ENCODE measurements at regions of chr14 and their contacts with region 1.

Region 1: GRCh38 chr14:34098045-34098984 is 147.4 kb upstream of the EGLN3 start:
- DNase-seq: peak; percentile 51
- ATAC-seq: no peak
- H3K4me3 Mint-ChIP-seq: no peak overlapping the region
- H3K27ac Mint-ChIP-seq: peak overlapping the region; percentile 48
- H3K4me1 Mint-ChIP-seq: peaks cover 30% of the 10 kb centered on the region
- H3K27me3 Mint-ChIP-seq: peaks cover 4% of the 10 kb centered on the region

Region 2: GRCh38 chr14:33839193-33840076 is 258.9 kb before region 1 on chr14:
- CTCF ChIA-PET with region 1: interaction called, 73 read pairs
- POLR2A ChIA-PET with region 1: no interaction called
- DNase-seq: peak; percentile 72
- ATAC-seq: peak; percentile 69
- H3K4me3 Mint-ChIP-seq: no peak overlapping the region
- H3K27ac Mint-ChIP-seq: no peak overlapping the region
- H3K4me1 Mint-ChIP-seq: peaks cover 31% of the 10 kb centered on the region
- H3K27me3 Mint-ChIP-seq: no peaks in the 10 kb centered on the region

Region 3: DNA sequence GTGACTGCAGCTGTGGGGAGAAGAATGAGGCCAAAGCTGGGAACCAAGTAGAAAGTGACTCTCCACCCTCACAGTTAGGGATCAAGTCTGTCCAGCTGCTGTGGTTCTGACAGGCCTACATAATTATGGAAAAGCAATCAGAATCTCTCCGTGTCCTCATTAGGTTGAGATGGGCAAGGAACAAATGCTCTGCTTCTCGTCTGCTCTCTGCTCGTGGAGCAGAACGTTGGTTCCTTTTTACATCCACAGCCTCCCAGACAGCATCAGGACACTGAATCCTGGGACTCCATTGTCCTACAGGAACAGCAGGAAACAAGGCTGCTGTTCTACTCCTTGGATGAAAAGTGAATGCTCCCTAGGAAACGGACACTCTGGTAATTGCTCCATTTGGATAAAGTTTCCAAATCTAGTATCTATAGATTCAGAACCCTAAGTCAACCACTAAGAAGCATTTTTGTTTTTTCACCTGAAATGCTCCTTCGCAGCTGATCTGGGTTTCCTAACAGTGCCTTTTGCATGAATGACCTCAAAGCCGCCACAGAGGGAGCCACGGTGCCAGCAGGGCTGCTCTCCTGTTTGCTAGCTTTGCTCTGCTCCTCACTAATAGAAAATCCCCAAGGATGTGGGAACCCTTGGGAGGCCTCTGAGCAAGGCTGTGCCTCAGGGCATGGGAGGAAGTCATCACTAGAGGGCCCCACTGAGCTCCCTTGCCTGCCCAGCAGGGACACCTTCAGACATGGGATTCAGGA is 249.4 kb before region 1 on chr14:
- CTCF ChIA-PET with region 1: interaction called, 73 read pairs
- POLR2A ChIA-PET with region 1: no interaction called
- DNase-seq: peak; percentile 33
- ATAC-seq: no peak
- H3K4me3 Mint-ChIP-seq: no peak overlapping the region
- H3K27ac Mint-ChIP-seq: no peak overlapping the region
- H3K4me1 Mint-ChIP-seq: no peaks in the 10 kb centered on the region
- H3K27me3 Mint-ChIP-seq: peaks cover 15% of the 10 kb centered on the region

Region 4: GRCh38 chr14:33946679-33947476 is 151.4 kb before region 1 on chr14:
- CTCF ChIA-PET with region 1: interaction called, 12 read pairs
- POLR2A ChIA-PET with region 1: no interaction called
- DNase-seq: no peak
- ATAC-seq: no peak
- H3K4me3 Mint-ChIP-seq: peak overlapping the region; percentile 22
- H3K27ac Mint-ChIP-seq: no peak overlapping the region
- H3K4me1 Mint-ChIP-seq: peaks cover 37% of the 10 kb centered on the region
- H3K27me3 Mint-ChIP-seq: peaks cover 57% of the 10 kb centered on the region

Region 5: GRCh38 chr14:34012978-34013720 is 85.2 kb before region 1 on chr14:
- CTCF ChIA-PET with region 1: interaction called, 10 read pairs
- POLR2A ChIA-PET with region 1: no interaction called
- DNase-seq: no peak
- ATAC-seq: peak; percentile 40
- H3K4me3 Mint-ChIP-seq: peak overlapping the region; percentile 43
- H3K27ac Mint-ChIP-seq: peak overlapping the region; percentile 81
- H3K4me1 Mint-ChIP-seq: peaks cover 44% of the 10 kb centered on the region
- H3K27me3 Mint-ChIP-seq: peaks cover 14% of the 10 kb centered on the region

Region 6: DNA sequence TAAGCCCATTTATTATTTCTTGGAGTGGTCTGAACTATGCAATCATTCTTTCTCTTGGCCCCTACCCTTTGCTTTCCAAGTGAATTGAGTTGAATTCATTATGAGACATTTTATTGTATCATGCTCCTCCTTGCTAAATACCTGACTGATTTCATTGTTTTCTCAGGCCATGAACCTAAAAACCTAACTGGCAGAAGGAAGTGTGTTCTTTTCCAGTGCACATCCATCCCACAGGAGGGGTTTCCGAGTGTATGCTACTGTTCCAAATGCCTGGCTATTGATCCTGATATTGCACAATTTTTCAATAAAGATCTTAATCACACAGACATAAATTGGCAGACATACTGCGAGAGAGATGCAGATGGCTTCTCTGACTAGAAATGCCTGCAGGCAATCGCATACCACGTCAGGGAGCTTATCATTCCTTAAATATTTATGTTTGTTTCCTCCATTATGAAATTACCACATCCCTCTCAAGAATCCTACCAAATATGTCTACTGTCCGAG is 14.7 kb after region 1 on chr14:
- CTCF ChIA-PET with region 1: interaction called, 10 read pairs
- POLR2A ChIA-PET with region 1: no interaction called
- DNase-seq: no peak
- ATAC-seq: no peak
- H3K4me3 Mint-ChIP-seq: no peak overlapping the region
- H3K27ac Mint-ChIP-seq: no peak overlapping the region
- H3K4me1 Mint-ChIP-seq: no peaks in the 10 kb centered on the region
- H3K27me3 Mint-ChIP-seq: peaks cover 33% of the 10 kb centered on the region